SK-N-SH (cell line): ENCODE measurements at regions of chr12 and their contacts with region 1.

Region 1: GRCh38 chr12:125065021-125065795 is at the start of gene AACS:
- DNase-seq: peak; percentile 99
- H3K4me3 ChIP-seq: peak within 1 kb of the TSS; percentile 69 to 71
- H3K27ac ChIP-seq: peak within 1 kb of the TSS in 1 of 2 experiments; percentile 47; a peak in 1 of 4 replicates
- H3K4me1 ChIP-seq: peaks cover 0 to 13% of the 10 kb centered on the region in 2 experiments; a peak in 1 of 4 replicates
- H3K27me3 ChIP-seq: no peaks in the 10 kb centered on the region
- CTCF ChIP-seq: no peak
- EP300 ChIP-seq: no peak; a peak in 1 of 4 replicates
- RAD21 ChIP-seq: no peak
- polyA plus RNA-seq, gene AACS: 17.1 and 17.3 TPM in 2 replicates

Region 2: GRCh38 chr12:125049093-125049458 is 16.1 kb before region 1 on chr12:
- CTCF ChIA-PET with region 1: interaction called, 8 read pairs
- POLR2A ChIA-PET with region 1: interaction called, 11 read pairs
- DNase-seq: no peak
- H3K4me3 ChIP-seq: peak overlapping the region; percentile 59 to 79
- H3K27ac ChIP-seq: peak overlapping the region in 1 of 2 experiments; percentile 28; a peak in 1 of 4 replicates
- H3K4me1 ChIP-seq: no peaks in the 10 kb centered on the region; a peak in 1 of 4 replicates
- H3K27me3 ChIP-seq: no peaks in the 10 kb centered on the region
- CTCF ChIP-seq: no peak
- EP300 ChIP-seq: no peak
- RAD21 ChIP-seq: no peak